Posterior vena cava (tissue), 2 donors: ENCODE measurements at regions of chr11 and their contacts with region 1.

Region 1: GRCh38 chr11:27705873-27706820 is 5.9 kb upstream of the BDNF start:
- DNase-seq: no peak

Region 2: DNA sequence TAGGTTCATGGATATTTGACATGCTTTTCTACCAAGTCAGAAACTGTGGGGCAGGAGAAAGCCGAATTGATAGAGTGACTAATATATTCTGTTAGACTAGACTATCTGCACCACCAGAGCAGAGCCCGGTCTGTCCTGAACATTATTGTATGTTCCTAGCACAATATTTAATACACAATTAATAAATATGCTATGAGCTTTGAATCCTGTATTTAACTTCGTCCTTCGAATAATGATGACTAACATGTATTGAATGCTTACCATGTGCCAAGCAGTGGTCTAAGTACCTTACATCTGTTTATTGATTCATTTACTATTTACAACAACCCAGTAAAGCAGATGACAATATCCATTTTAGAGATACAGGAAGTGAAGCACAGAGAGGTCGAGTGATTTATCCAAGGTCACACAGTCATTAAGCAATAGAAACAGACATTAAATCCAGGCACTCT is 1419.1 kb before region 1 on chr11:
- intact Hi-C with region 1: no loop called
- DNase-seq: no peak

Region 3: GRCh38 chr11:28107748-28108618 is 401.8 kb after region 1 on chr11 and contains the starts of genes KIF18A and METTL15:
- intact Hi-C with region 1: loop called in 1 of 2 experiments (anchors 10 kb)
- DNase-seq: peak; percentile 100
- total RNA-seq, gene KIF18A: 1.7 to 4.2 TPM
- total RNA-seq, gene METTL15: 17.1 to 17.6 TPM

Region 4: DNA sequence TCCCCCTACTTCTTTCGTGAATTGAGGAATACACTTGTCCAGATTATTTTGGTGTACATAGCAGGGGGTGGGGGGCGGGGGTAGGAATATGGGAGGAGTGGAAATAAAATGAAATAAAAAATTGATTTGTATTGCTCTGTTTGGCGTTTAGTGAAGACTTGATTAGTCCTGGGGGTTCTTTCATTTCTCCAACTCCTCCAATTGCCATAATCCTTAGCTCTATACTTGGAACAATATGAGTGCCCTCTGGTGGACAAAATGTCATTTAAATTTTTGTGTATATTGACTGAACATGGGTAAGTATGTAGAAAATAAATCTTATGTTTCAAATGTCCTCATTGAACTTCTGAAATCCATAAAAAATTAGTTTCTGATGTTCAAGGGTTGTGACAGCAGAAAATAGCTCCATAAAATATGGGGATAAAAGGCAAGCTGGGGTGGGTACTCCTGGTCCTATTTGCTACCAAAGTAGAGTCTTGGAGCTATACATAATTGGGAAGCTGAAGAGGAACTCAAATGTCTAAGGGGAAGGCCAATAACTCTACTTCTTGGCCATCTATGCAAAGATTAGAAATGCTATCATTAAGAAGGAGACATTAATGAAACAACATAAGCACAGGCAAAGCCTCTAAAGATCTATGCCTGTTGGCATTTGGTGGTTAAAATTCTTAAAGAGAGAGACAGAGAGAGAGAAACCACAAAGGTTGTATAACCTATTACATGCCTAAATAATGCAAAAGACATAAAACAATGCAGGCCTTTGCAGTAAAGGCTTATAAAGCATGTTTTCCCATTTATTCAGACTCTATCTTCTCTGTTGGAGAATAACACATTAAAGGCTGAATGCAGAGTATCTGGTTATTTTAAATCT is 823.6 kb after region 1 on chr11:
- intact Hi-C with region 1: loop called in 1 of 2 experiments (anchors 10 kb)
- DNase-seq: no peak